ENCODE measurements at regions of chr10 and their contacts with region 1.

Region 1: GRCh38 chr10:69087590-69088470 is at the start of gene SRGN:
- DNase-seq: peak; percentile 99
- ATAC-seq: peak; percentile 66
- H3K4me3 ChIP-seq: peak within 1 kb of the TSS; percentile 72
- H3K27ac ChIP-seq: peak within 1 kb of the TSS; percentile 77
- H3K4me1 ChIP-seq: peaks cover 52% of the 10 kb centered on the region
- H3K27me3 ChIP-seq: no peaks in the 10 kb centered on the region
- CTCF ChIP-seq: no peak
- total RNA-seq, gene SRGN: 346 and 422 TPM in 2 replicates

Region 2: GRCh38 chr10:68988530-68989316 is 99.1 kb before region 1 on chr10 and contains the start of gene KIFBP:
- CTCF ChIA-PET with region 1: interaction called, 4 read pairs
- POLR2A ChIA-PET with region 1: no interaction called
- intact Hi-C with region 1: loop called (anchors 1 kb)
- DNase-seq: peak; percentile 99
- ATAC-seq: peak; percentile 85
- H3K4me3 ChIP-seq: peak within 1 kb of the TSS; percentile 80
- H3K27ac ChIP-seq: peak within 1 kb of the TSS; percentile 51
- H3K4me1 ChIP-seq: peaks cover 37% of the 10 kb centered on the region
- H3K27me3 ChIP-seq: no peaks in the 10 kb centered on the region
- CTCF ChIP-seq: peak; percentile 73
- total RNA-seq, gene KIFBP: 65.9 and 72.9 TPM in 2 replicates

Region 3: DNA sequence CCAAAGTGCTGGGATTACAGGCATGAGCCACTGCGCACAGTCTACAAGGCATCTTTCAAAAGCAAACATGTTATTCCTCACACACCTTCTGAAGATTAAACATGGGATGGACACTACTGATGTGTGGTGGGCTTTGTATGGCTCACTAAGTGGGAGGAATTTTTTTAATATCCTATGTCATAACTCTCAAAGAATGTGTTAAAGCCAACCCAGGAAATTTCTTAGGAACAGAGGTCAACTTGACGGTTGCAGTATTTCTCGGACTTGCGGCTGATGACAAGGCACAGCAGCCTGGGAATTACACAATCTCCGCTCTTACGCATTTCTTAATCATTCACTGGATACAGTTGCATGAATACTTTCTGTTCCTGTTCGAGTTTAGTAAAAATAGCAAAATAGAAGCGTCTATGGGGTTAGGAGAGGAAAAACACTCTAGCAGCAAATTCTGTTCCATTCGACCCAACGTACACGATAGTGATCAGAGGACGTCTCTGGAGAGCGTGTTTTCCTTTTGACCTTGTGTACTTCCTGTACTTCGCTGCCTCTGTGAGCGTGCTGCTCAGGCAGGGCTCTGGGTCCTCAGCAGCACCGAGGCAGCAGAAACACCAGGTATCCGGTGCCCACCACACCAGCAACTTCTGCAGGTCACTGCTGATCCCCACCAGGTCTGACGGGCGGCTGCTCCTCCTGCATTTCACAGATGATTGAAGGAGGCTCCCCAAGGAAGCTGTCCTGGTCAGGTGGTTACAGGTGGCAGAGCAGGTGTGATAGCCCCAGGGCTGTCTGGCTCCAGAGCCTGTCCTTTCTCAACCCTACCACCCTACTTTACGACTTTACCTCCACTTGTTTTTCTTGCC is 26.3 kb before region 1 on chr10:
- CTCF ChIA-PET with region 1: no interaction called
- POLR2A ChIA-PET with region 1: interaction called, 4 read pairs
- intact Hi-C with region 1: loop called (anchors 1 kb)
- DNase-seq: peak; percentile 100
- ATAC-seq: peak; percentile 82
- H3K4me3 ChIP-seq: peak overlapping the region; percentile 64
- H3K27ac ChIP-seq: peak overlapping the region; percentile 89
- H3K4me1 ChIP-seq: peaks cover 37% of the 10 kb centered on the region
- H3K27me3 ChIP-seq: no peaks in the 10 kb centered on the region
- CTCF ChIP-seq: no peak

Region 4: GRCh38 chr10:69070951-69071350 is 16.9 kb before region 1 on chr10:
- CTCF ChIA-PET with region 1: no interaction called
- POLR2A ChIA-PET with region 1: interaction called, 18 read pairs
- intact Hi-C with region 1: no loop called
- DNase-seq: no peak
- ATAC-seq: no peak
- H3K4me3 ChIP-seq: no peak overlapping the region
- H3K27ac ChIP-seq: no peak overlapping the region
- H3K4me1 ChIP-seq: peaks cover 4% of the 10 kb centered on the region; the same call in 1 of the 2 replicates
- H3K27me3 ChIP-seq: no peaks in the 10 kb centered on the region
- CTCF ChIP-seq: no peak

Region 5: GRCh38 chr10:69172241-69172982 is 84.6 kb after region 1 on chr10:
- CTCF ChIA-PET with region 1: no interaction called
- POLR2A ChIA-PET with region 1: no interaction called
- intact Hi-C with region 1: no loop called
- DNase-seq: no peak
- ATAC-seq: no peak
- H3K4me3 ChIP-seq: no peak overlapping the region
- H3K27ac ChIP-seq: no peak overlapping the region
- H3K4me1 ChIP-seq: no peaks in the 10 kb centered on the region
- H3K27me3 ChIP-seq: no peaks in the 10 kb centered on the region
- CTCF ChIP-seq: no peak

Region 6: GRCh38 chr10:69800109-69800508 is 712.3 kb after region 1 on chr10:
- CTCF ChIA-PET with region 1: no interaction called
- POLR2A ChIA-PET with region 1: no interaction called
- intact Hi-C with region 1: no loop called
- DNase-seq: peak; percentile 93
- ATAC-seq: peak; percentile 26
- H3K4me3 ChIP-seq: no peak overlapping the region
- H3K27ac ChIP-seq: no peak overlapping the region
- H3K4me1 ChIP-seq: peaks cover 47% of the 10 kb centered on the region
- H3K27me3 ChIP-seq: no peaks in the 10 kb centered on the region
- CTCF ChIP-seq: peak; percentile 98

Measured in PC-3 (cell line).